ENCODE measurements at regions of chr3 and their contacts with region 1.

Region 1: GRCh38 chr3:157081681-157082210 is 78.2 kb downstream of the CCNL1 start:
- DNase-seq: peak; percentile 93
- ATAC-seq: peak; percentile 83

Region 2: GRCh38 chr3:156816800-156817645 is 264.7 kb before region 1 on chr3:
- intact Hi-C with region 1: loop called (anchors 10 kb)
- DNase-seq: peak; percentile 94
- ATAC-seq: peak; percentile 96

Region 3: DNA sequence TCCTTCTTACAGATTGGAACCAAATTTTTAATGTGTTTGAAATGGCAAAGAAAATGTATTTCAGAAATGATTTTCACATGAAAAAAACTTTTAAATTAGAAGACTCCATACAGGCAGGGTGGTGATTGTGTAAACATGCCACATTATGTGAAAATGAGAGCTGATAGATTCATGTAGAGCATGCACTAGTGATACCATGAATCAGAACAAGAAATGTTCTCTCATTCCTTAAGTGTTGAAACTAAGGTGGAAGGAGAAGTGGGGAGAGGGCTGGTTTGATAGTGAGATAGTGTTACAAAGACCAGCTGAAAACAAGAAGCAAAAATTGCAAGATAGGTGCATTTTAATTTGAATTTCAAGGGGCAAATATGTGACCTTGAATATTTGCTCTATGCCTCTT is 22.1 kb before region 1 on chr3:
- intact Hi-C with region 1: no loop called
- DNase-seq: no peak
- ATAC-seq: no peak

Region 4: GRCh38 chr3:157572559-157573270 is 491.0 kb after region 1 on chr3:
- intact Hi-C with region 1: no loop called
- DNase-seq: no peak
- ATAC-seq: peak; percentile 36